Tibial artery (tissue), 4 donors: ENCODE measurements at regions of chr12 and their contacts with region 1.

Region 1: GRCh38 chr12:85866986-85867776 is 6.9 kb upstream of the NTS start:
- DNase-seq: no peak
- H3K4me3 ChIP-seq: no peak overlapping the region
- H3K27ac ChIP-seq: no peak overlapping the region
- H3K4me1 ChIP-seq: no peaks in the 10 kb centered on the region
- H3K27me3 ChIP-seq: no peaks in the 10 kb centered on the region
- CTCF ChIP-seq: peak; percentile 75 to 86

Region 2: GRCh38 chr12:85468356-85469157 is 398.6 kb before region 1 on chr12:
- intact Hi-C with region 1: loop called (anchors 2 kb)
- DNase-seq: peak in 1 of 2 donors; percentile 56
- H3K4me3 ChIP-seq: peak overlapping the region; percentile 42 to 46
- H3K27ac ChIP-seq: no peak overlapping the region
- H3K4me1 ChIP-seq: peaks cover 0 to 18% (median 8%) of the 10 kb centered on the region in 4 donors
- H3K27me3 ChIP-seq: no peaks in the 10 kb centered on the region
- CTCF ChIP-seq: peak; percentile 72

Region 3: GRCh38 chr12:85575120-85576096 is 291.8 kb before region 1 on chr12:
- intact Hi-C with region 1: loop called (anchors 2 kb)
- DNase-seq: peak in 1 of 2 donors; percentile 39
- H3K4me3 ChIP-seq: no peak overlapping the region
- H3K27ac ChIP-seq: no peak overlapping the region
- H3K4me1 ChIP-seq: peaks cover 0 to 25% (median 0%) of the 10 kb centered on the region in 4 donors
- H3K27me3 ChIP-seq: no peaks in the 10 kb centered on the region
- CTCF ChIP-seq: peak; percentile 60 to 62